Activated CD4-positive, alpha-beta T cell treated with anti-CD3 and anti-CD28 coated beads, Interleukin-2, amount 10 ng/mL, durations not matched to agents 24 days and 14 days (primary cell): ENCODE measurements at regions of chr13 and their contacts with region 1.

Region 1: DNA sequence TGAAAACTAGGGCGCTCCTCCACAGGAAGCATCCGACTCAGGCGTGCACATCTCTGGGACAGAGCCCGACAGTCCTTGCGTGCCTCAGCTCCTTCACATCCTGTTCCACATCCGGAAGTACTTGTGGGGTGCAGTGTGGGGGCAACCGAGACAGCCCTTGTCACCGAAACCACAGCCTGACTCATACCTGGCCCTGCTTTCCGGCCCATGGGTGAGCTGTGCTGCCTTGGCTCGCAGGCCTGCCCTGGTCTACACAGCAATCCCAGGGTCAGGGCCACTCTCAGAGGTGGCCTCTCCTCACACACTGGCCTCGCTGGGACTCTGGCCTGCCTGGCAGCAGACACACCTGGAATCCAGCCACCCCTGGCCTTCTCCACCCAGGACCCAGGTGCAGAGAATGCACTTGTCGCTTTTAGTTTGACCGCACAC is 100.4 kb downstream of the STK24 start:
- DNase-seq: peak; percentile 96
- H3K4me3 Mint-ChIP-seq: peak overlapping the region; percentile 79
- H3K27ac Mint-ChIP-seq: peak overlapping the region; percentile 96
- H3K4me1 Mint-ChIP-seq: peaks cover 61% of the 10 kb centered on the region
- H3K27me3 Mint-ChIP-seq: no peaks in the 10 kb centered on the region

Region 2: DNA sequence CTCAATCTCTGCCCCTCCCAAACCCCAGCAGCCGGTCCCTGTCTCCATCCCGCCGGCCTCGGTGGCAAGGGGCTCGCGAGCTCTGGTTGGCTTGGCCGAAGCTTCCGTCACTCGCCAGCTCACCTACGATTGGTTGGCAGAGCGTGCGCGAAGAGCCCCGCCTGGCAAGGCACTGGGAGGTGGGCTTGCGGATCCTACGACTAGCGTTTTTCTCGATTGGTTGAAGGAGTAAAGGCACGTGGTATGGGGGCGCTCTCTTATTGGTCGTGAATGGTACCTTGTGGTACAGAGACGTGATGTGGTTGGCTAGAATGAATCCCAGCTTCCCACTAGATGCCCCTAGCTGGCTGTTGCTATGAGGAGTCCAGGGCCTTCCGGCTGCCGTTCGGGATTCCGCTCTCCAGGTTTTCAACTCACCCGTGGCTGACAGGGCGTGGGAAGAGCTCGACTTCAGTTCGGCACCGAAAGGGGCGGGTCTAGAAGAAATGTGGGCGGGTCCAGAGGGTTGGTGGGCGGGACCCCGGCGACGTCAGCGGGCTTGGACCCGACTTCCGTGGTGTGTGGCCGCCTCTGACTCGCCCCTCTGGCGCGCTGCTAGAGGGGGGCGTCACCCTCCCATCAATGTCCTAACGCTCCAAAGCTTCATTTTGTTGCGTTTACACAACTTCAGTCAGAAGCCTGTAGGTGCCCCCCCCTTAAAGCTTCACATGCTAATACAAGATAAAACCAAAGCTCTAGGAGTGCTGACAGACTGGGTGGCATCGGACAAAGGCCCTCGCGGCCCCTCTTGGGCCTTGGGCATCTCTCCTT is 1043.4 kb before region 1 on chr13:
- intact Hi-C with region 1: loop called (anchors 2 kb)
- DNase-seq: peak; percentile 100
- H3K4me3 Mint-ChIP-seq: peak overlapping the region; percentile 94
- H3K27ac Mint-ChIP-seq: peak overlapping the region; percentile 98
- H3K4me1 Mint-ChIP-seq: peaks cover 32% of the 10 kb centered on the region
- H3K27me3 Mint-ChIP-seq: peaks cover 12% of the 10 kb centered on the region

Region 3: DNA sequence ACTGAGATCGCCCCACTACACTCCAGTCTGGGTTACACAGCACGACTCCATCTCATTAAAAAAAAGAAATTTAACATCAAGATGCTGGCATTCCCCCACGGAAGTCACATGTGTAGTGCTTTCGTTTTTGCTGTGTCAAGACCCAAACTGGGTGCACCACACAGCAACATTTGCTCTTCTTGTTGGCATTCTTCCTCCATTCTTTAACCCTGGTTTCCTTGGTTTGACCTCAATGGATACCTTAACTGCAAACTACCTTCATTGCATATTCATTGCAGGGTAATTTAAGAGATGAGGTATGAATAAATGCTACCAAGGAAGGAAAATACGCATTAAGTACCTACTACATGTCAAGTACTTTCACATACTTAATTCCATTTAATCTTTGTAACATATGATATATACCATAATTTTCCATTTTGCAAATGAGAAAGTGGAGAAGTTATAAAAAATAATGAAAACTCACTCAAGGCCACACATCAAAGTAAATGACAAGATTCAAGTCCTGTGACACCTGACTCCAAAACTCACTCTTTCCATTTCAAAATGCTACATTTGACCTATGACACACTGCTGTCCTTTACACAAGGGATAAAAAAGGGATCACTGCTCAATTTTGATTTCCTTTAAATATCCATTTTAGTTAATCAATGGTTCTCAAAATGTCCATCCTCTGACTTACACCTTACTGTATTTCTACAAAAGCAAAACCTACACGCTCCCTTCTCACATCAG is 41.2 kb after region 1 on chr13:
- intact Hi-C with region 1: loop called (anchors 1 kb)
- DNase-seq: peak; percentile 82
- H3K4me3 Mint-ChIP-seq: peak overlapping the region; percentile 67
- H3K27ac Mint-ChIP-seq: peak overlapping the region; percentile 92
- H3K4me1 Mint-ChIP-seq: peaks cover 86% of the 10 kb centered on the region
- H3K27me3 Mint-ChIP-seq: no peaks in the 10 kb centered on the region

Region 4: GRCh38 chr13:98528663-98529570 is 52.4 kb after region 1 on chr13:
- intact Hi-C with region 1: loop called (anchors 2 kb)
- DNase-seq: no peak
- H3K4me3 Mint-ChIP-seq: peak overlapping the region; percentile 21
- H3K27ac Mint-ChIP-seq: peak overlapping the region; percentile 87
- H3K4me1 Mint-ChIP-seq: peaks cover 62% of the 10 kb centered on the region
- H3K27me3 Mint-ChIP-seq: no peaks in the 10 kb centered on the region

Region 5: GRCh38 chr13:98570929-98571372 is 94.4 kb after region 1 on chr13:
- intact Hi-C with region 1: loop called (anchors 1 kb)
- DNase-seq: peak; percentile 86
- H3K4me3 Mint-ChIP-seq: peak overlapping the region; percentile 80
- H3K27ac Mint-ChIP-seq: peak overlapping the region; percentile 90
- H3K4me1 Mint-ChIP-seq: peaks cover 87% of the 10 kb centered on the region
- H3K27me3 Mint-ChIP-seq: no peaks in the 10 kb centered on the region

Region 6: GRCh38 chr13:98598043-98598442 is 121.5 kb after region 1 on chr13:
- intact Hi-C with region 1: loop called (anchors 2 kb)
- DNase-seq: no peak
- H3K4me3 Mint-ChIP-seq: no peak overlapping the region
- H3K27ac Mint-ChIP-seq: peak overlapping the region; percentile 51
- H3K4me1 Mint-ChIP-seq: peaks cover 14% of the 10 kb centered on the region
- H3K27me3 Mint-ChIP-seq: peaks cover 12% of the 10 kb centered on the region

Region 7: GRCh38 chr13:98664039-98664438 is 187.5 kb after region 1 on chr13:
- intact Hi-C with region 1: loop called (anchors 1 kb)
- DNase-seq: peak; percentile 73
- H3K4me3 Mint-ChIP-seq: peak overlapping the region; percentile 5
- H3K27ac Mint-ChIP-seq: peak overlapping the region; percentile 82
- H3K4me1 Mint-ChIP-seq: peaks cover 14% of the 10 kb centered on the region
- H3K27me3 Mint-ChIP-seq: peaks cover 18% of the 10 kb centered on the region

Region 8: DNA sequence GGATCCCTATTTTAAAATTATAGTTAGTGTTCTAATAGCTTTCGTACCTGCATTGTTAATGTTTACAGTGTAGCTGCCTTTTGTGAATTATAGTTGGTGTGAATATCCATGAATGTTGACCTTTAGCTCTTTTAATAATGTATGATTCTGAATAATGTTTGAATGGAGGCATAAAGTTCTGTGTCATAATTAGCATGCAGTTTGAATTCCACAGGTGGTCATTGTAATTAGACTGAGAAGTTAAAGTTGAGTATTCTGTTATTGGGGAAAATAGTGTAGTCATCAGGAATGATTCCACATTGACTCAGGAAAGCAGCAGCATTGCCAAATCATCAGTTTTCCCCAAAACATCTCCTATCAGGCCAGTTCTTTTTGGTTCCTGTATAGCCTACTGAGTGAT is 769.5 kb after region 1 on chr13:
- intact Hi-C with region 1: no loop called
- DNase-seq: no peak
- H3K4me3 Mint-ChIP-seq: no peak overlapping the region
- H3K27ac Mint-ChIP-seq: no peak overlapping the region
- H3K4me1 Mint-ChIP-seq: peaks cover 14% of the 10 kb centered on the region
- H3K27me3 Mint-ChIP-seq: no peaks in the 10 kb centered on the region